Ascending aorta (tissue), 2 donors: ENCODE measurements at regions of chr10 and their contacts with region 1.

Region 1: GRCh38 chr10:4941540-4942330 is 21.5 kb upstream of the AKR1C1 start:
- DNase-seq: no peak
- H3K4me3 ChIP-seq: no peak overlapping the region
- H3K27ac ChIP-seq: peak overlapping the region; percentile 91 to 94
- H3K4me1 ChIP-seq: peaks cover 16 to 37% of the 10 kb centered on the region in 2 donors
- H3K27me3 ChIP-seq: no peaks in the 10 kb centered on the region
- CTCF ChIP-seq: no peak

Region 2: DNA sequence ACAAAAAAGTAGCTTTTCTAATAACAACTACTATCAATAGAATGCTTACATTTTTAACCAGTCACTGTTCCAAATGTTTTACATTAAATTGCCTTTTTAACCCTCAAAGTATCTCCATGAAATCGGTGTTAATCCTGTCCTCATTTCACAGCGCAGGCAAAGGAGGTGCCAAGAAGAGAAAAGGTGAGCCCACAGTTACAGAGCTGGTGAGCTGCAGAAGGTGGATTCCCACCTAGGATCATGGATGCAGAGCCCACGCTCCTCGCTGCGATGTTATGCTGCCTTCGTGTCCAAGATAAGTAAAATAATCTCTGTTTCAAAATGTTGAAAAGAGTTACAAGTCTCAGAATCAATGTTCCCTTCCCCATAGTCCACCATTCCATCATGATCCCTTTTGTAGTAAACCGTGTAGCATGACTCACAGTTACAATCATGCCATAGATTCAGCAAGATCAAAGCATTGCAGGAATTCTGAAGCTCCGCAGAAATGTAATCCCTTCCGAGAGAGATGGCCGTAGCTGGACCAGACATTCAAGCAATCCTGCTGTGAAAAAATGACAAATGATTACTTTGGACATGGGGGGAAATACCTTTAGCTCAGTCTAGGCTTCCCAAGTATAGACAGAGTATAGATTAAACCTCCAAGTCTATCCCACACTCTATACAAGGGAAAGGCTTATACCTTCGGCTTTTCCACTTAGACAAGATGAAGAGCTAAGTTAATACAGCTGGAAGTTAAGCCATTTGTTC is 510.4 kb before region 1 on chr10:
- intact Hi-C with region 1: no loop called
- DNase-seq: no peak
- H3K4me3 ChIP-seq: no peak overlapping the region
- H3K27ac ChIP-seq: no peak overlapping the region
- H3K4me1 ChIP-seq: peaks cover 0 to 3% of the 10 kb centered on the region in 2 donors
- H3K27me3 ChIP-seq: no peaks in the 10 kb centered on the region
- CTCF ChIP-seq: no peak

Region 3: DNA sequence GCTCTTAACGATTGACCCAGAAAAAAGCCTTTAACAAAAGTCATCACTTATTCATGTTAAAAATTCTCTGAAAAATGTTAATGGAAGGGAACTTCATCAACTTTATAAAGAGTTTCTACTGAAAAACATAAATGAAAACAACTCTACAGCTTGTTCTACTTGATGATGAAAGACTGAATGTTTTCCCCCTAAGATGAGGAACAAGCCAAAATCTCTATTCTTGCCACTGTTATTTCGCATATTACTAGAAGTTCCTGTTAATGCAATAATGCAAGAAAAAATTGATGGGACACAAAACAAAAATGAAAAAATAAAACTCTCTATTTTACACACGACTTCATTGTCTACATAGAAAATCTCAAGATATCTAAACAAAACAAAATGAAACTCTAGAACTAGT is 365.5 kb before region 1 on chr10:
- intact Hi-C with region 1: no loop called
- DNase-seq: no peak
- H3K4me3 ChIP-seq: no peak overlapping the region
- H3K27ac ChIP-seq: no peak overlapping the region
- H3K4me1 ChIP-seq: no peaks in the 10 kb centered on the region
- H3K27me3 ChIP-seq: no peaks in the 10 kb centered on the region
- CTCF ChIP-seq: no peak

Region 4: GRCh38 chr10:4867520-4868356 is 74.0 kb before region 1 on chr10:
- intact Hi-C with region 1: loop called (anchors 5 kb)
- DNase-seq: no peak
- H3K4me3 ChIP-seq: no peak overlapping the region
- H3K27ac ChIP-seq: peak overlapping the region; percentile 39 to 74
- H3K4me1 ChIP-seq: peaks cover 0 to 3% of the 10 kb centered on the region in 2 donors
- H3K27me3 ChIP-seq: no peaks in the 10 kb centered on the region
- CTCF ChIP-seq: no peak

Region 5: DNA sequence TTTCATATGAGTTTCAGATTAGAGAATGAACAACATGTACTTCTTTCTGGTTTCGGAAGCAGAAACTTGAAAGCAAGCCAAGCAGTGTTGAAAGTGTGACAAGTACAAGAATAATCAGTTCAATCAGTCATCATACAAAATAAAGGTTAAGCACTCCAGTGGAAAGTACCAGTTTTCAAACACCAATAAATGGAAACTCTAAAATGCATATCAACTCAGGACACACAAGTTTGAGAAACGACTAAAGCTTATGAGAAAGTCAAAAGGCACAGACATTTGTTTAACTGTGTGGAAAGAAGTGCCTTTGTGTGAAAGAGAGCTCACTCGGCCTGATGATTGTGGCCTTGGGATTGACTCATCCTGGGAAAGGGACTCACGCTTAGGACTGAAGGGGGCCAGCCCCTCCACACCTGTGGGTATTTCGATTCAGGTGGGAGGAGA is 39.1 kb before region 1 on chr10:
- intact Hi-C with region 1: loop called (anchors 5 kb)
- DNase-seq: no peak
- H3K4me3 ChIP-seq: peak overlapping the region; percentile 22 to 33
- H3K27ac ChIP-seq: peak overlapping the region; percentile 67 to 73
- H3K4me1 ChIP-seq: peaks cover 0 to 27% of the 10 kb centered on the region in 2 donors
- H3K27me3 ChIP-seq: no peaks in the 10 kb centered on the region
- CTCF ChIP-seq: no peak

Region 6: DNA sequence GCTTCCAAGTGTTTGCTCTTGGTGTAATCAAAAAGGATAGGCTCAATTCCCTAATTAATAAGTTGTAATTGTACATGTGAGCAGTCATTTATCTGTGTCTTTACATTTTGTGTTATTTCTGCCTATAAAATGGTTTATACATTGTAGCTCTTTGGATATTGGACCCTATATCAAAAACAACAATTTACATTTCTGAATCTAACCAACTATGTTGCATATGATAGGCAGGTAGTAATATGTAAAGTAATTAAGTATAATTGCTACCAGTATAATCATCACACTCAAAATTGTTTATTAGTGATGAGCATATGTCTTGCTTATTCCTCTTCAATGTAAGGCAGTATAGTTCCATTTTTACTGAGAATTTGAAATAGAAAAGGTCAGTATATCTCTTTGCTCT is 35.3 kb after region 1 on chr10:
- intact Hi-C with region 1: no loop called
- DNase-seq: no peak
- H3K4me3 ChIP-seq: no peak overlapping the region
- H3K27ac ChIP-seq: no peak overlapping the region
- H3K4me1 ChIP-seq: no peaks in the 10 kb centered on the region
- H3K27me3 ChIP-seq: no peaks in the 10 kb centered on the region
- CTCF ChIP-seq: no peak

Region 7: GRCh38 chr10:6721480-6721879 is 1779.7 kb after region 1 on chr10:
- intact Hi-C with region 1: no loop called
- DNase-seq: peak in 1 of 2 donors; percentile 67
- H3K4me3 ChIP-seq: no peak overlapping the region
- H3K27ac ChIP-seq: no peak overlapping the region
- H3K4me1 ChIP-seq: no peaks in the 10 kb centered on the region
- H3K27me3 ChIP-seq: no peaks in the 10 kb centered on the region
- CTCF ChIP-seq: no peak